Naive thymus-derived CD4-positive, alpha-beta T cell (primary cell): ENCODE measurements at regions of chr14 and their contacts with region 1.

Region 1: GRCh38 chr14:61188978-61189808 is 91.9 kb downstream of the TMEM30B start:
- DNase-seq: peak in 4 of 9 donors; percentile 11 to 48 (median 16)
- ATAC-seq: peak; percentile 54
- H3K4me3 ChIP-seq: no peak overlapping the region
- H3K4me3 Mint-ChIP-seq: peak overlapping the region; percentile 7 to 71 (median 61)
- H3K27ac ChIP-seq: no peak overlapping the region
- H3K27ac Mint-ChIP-seq: peak overlapping the region in 1 of 9 donors; percentile 52
- H3K4me1 ChIP-seq: no peaks in the 10 kb centered on the region
- H3K4me1 Mint-ChIP-seq: peaks cover 6 to 13% (median 10%) of the 10 kb centered on the region in 7 donors
- H3K27me3 ChIP-seq: peaks cover 0 to 7% of the 10 kb centered on the region in 2 donors
- H3K27me3 Mint-ChIP-seq: peaks cover 34 to 65% (median 52%) of the 10 kb centered on the region in 5 donors

Region 2: GRCh38 chr14:60628892-60629291 is 560.3 kb before region 1 on chr14:
- CTCF ChIA-PET with region 1: no interaction called
- POLR2A ChIA-PET with region 1: no interaction called
- intact Hi-C with region 1: loop called in 1 of 2 experiments (anchors 5 kb)
- DNase-seq: no peak
- ATAC-seq: no peak
- H3K4me3 ChIP-seq: no peak overlapping the region
- H3K4me3 Mint-ChIP-seq: no peak overlapping the region
- H3K27ac ChIP-seq: no peak overlapping the region
- H3K27ac Mint-ChIP-seq: no peak overlapping the region
- H3K4me1 ChIP-seq: peaks cover 5 to 7% of the 10 kb centered on the region in 2 donors
- H3K4me1 Mint-ChIP-seq: peaks cover 0 to 12% (median 8%) of the 10 kb centered on the region in 7 donors
- H3K27me3 ChIP-seq: no peaks in the 10 kb centered on the region
- H3K27me3 Mint-ChIP-seq: peaks cover 25 to 58% (median 31%) of the 10 kb centered on the region in 5 donors